HepG2 (cell line): ENCODE measurements at regions of chr3 and their contacts with region 1.

Region 1: DNA sequence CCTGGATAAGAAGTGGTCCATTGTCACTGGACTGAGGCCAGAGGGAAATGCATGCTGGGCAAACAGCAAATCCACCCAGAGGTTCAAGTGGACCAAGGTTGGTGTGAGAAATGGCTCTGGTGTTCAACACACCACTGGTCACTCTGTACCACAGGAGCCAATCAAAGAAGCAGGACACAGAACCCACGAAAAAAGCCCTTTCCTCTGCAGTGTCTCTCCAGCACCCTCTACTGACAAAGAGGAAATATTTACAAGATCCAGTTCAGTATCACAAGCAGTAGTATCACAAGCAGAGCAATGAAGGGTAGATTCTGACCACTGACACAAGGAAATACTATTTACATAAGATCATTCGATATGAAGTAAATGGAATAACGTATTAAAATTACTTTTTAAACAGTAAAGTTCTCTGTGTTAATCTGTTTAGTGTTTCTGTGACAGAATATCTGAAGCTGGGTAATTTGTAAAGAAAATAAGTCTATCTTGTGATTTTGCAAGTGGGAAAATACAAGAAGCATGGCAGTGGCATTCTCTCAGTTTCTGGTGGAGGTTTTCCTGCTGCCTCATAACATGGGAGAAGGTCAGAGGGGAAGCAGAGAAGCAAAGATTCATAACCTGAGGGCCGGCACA is 390.7 kb downstream of the EFHB start:
- DNase-seq: peak; percentile 15
- ATAC-seq: peak; percentile 72
- H3K4me3 ChIP-seq: no peak overlapping the region
- H3K27ac ChIP-seq: no peak overlapping the region
- H3K4me1 ChIP-seq: no peaks in the 10 kb centered on the region
- H3K27me3 ChIP-seq: no peaks in the 10 kb centered on the region
- CTCF ChIP-seq: peak; percentile 54
- EP300 ChIP-seq: no peak
- POLR2A ChIP-seq: no peak
- RAD21 ChIP-seq: no peak

Region 2: GRCh38 chr3:19065027-19065426 is 478.3 kb before region 1 on chr3:
- CTCF ChIA-PET with region 1: no interaction called
- POLR2A ChIA-PET with region 1: no interaction called
- in situ Hi-C with region 1: loop called (anchors 25 kb)
- intact Hi-C with region 1: loop called (anchors 5 kb)
- DNase-seq: peak; percentile 10
- ATAC-seq: no peak
- H3K4me3 ChIP-seq: no peak overlapping the region
- H3K27ac ChIP-seq: no peak overlapping the region
- H3K4me1 ChIP-seq: no peaks in the 10 kb centered on the region
- H3K27me3 ChIP-seq: no peaks in the 10 kb centered on the region
- CTCF ChIP-seq: peak; percentile 58
- EP300 ChIP-seq: no peak
- POLR2A ChIP-seq: no peak
- RAD21 ChIP-seq: peak; percentile 41; the same call in 1 of the 2 replicates

Region 3: DNA sequence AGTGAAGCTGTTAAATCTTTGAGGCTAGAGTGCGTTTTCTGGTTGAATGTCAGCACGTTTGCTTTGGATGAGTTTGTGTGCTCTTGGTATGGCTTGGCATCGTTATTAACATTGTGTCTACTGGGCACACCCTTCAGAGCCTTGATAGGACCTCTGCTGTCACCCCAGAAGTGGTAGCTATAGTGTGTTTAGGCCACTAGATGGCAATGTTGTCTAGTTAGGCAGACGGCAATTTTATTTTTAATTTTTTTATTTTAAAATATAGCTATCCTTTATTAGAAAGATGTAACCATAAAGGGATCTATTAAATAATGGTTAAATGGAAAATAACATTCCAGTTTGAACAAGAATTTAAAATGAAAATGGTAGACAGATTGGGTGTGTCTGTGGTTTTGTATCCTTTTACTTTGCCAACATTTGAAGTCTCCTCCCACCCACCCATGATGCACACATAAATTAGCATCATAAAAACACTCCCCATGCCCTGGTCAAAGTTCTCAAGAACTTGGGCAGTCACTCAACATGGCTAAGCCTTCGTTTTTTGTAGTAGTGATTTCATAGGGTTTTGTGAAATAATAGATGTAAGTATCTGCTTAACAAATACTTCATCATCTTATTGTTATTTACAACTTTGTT is 194.3 kb before region 1 on chr3:
- CTCF ChIA-PET with region 1: no interaction called
- POLR2A ChIA-PET with region 1: no interaction called
- in situ Hi-C with region 1: no loop called
- intact Hi-C with region 1: loop called (anchors 1 kb)
- DNase-seq: peak; percentile 8
- ATAC-seq: peak; percentile 71
- H3K4me3 ChIP-seq: no peak overlapping the region
- H3K27ac ChIP-seq: no peak overlapping the region
- H3K4me1 ChIP-seq: no peaks in the 10 kb centered on the region
- H3K27me3 ChIP-seq: no peaks in the 10 kb centered on the region
- CTCF ChIP-seq: peak; percentile 35
- EP300 ChIP-seq: no peak
- POLR2A ChIP-seq: no peak
- RAD21 ChIP-seq: no peak